Caco-2 (cell line): ENCODE measurements at regions of chrX and their contacts with region 1.

Region 1: GRCh38 chrX:133171962-133172708 is 46.0 kb downstream of the TFDP3 start:
- DNase-seq: peak in 1 of 2 experiments; percentile 28
- H3K4me3 ChIP-seq: no peak overlapping the region
- H3K4me3 Mint-ChIP-seq: no peak overlapping the region
- H3K27ac Mint-ChIP-seq: no peak overlapping the region
- H3K4me1 ChIP-seq: no peaks in the 10 kb centered on the region
- H3K4me1 Mint-ChIP-seq: no peaks in the 10 kb centered on the region
- H3K27me3 ChIP-seq: no peaks in the 10 kb centered on the region; the same call in 1 of the 2 replicates
- H3K27me3 Mint-ChIP-seq: peaks cover 7% of the 10 kb centered on the region
- CTCF ChIP-seq: peak; percentile 40 to 47

Region 2: GRCh38 chrX:132631579-132632232 is 540.4 kb before region 1 on chrX:
- CTCF ChIA-PET with region 1: no interaction called
- POLR2A ChIA-PET with region 1: no interaction called
- intact Hi-C with region 1: loop called (anchors 5 kb)
- DNase-seq: peak in 1 of 2 experiments; percentile 16
- H3K4me3 ChIP-seq: no peak overlapping the region
- H3K4me3 Mint-ChIP-seq: no peak overlapping the region
- H3K27ac Mint-ChIP-seq: no peak overlapping the region
- H3K4me1 ChIP-seq: no peaks in the 10 kb centered on the region
- H3K4me1 Mint-ChIP-seq: no peaks in the 10 kb centered on the region
- H3K27me3 ChIP-seq: no peaks in the 10 kb centered on the region
- H3K27me3 Mint-ChIP-seq: no peaks in the 10 kb centered on the region
- CTCF ChIP-seq: peak; percentile 32 to 35

Region 3: GRCh38 chrX:132740316-132741123 is 431.6 kb before region 1 on chrX:
- CTCF ChIA-PET with region 1: no interaction called
- POLR2A ChIA-PET with region 1: no interaction called
- intact Hi-C with region 1: loop called (anchors 5 kb)
- DNase-seq: peak in 1 of 2 experiments; percentile 8
- H3K4me3 ChIP-seq: no peak overlapping the region
- H3K4me3 Mint-ChIP-seq: no peak overlapping the region
- H3K27ac Mint-ChIP-seq: no peak overlapping the region
- H3K4me1 ChIP-seq: no peaks in the 10 kb centered on the region
- H3K4me1 Mint-ChIP-seq: peaks cover 6% of the 10 kb centered on the region
- H3K27me3 ChIP-seq: no peaks in the 10 kb centered on the region
- H3K27me3 Mint-ChIP-seq: no peaks in the 10 kb centered on the region
- CTCF ChIP-seq: peak; percentile 61 to 66

Region 4: DNA sequence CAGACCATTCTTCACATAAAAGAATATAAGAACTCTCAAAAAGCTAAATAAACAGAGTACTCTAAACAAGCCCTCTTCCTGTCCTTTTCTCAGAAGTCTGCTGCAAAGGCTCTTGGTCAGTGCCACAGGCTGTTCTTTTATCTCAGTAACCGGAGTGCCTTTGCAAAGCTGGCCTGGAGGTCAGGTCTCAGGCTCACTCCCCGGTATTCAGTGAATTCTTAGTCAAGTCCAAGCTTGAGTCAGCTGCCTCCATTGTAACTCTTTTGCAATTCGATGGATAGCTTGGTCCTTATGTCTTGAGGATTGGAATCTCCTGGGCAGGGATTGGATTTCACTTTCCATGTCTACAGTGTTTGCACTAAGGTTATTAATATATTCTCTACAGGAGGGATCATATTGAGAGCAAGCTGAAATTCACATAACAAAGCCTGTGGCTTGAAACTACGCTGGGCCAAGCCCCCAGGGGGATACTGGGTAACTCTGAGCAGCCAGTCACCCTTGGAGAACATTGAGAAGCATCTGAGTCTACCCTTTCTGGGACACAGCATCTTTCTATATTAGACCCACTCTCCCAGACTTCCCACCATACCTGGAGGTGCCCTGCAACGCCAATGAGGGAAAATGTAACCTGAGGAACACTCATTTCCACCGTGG is 203.7 kb before region 1 on chrX:
- CTCF ChIA-PET with region 1: no interaction called
- POLR2A ChIA-PET with region 1: no interaction called
- intact Hi-C with region 1: loop called (anchors 10 kb)
- DNase-seq: peak; percentile 17 to 35
- H3K4me3 ChIP-seq: no peak overlapping the region
- H3K4me3 Mint-ChIP-seq: no peak overlapping the region
- H3K27ac Mint-ChIP-seq: no peak overlapping the region
- H3K4me1 ChIP-seq: no peaks in the 10 kb centered on the region
- H3K4me1 Mint-ChIP-seq: no peaks in the 10 kb centered on the region
- H3K27me3 ChIP-seq: no peaks in the 10 kb centered on the region
- H3K27me3 Mint-ChIP-seq: no peaks in the 10 kb centered on the region
- CTCF ChIP-seq: no peak

Region 5: DNA sequence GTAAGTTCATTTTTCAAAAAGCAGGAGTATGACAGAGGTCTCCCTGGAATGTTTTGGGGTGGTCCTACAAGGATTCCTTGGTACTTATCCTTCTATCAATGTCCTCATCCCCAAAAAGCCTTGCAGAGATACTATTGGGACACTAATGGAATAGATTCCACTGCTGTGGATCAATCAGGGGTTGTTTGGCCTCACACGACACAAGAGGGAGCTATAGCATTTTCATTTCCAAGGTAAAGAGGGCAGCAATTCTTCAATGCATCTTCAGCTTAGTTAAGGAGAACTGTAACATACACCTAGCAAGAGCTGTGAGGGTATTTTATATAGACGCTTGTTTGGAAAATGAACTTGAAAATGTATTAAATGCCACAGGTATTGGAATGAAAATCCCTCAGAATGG is 126.1 kb before region 1 on chrX:
- CTCF ChIA-PET with region 1: interaction called, 3 read pairs
- POLR2A ChIA-PET with region 1: no interaction called
- intact Hi-C with region 1: loop called (anchors 1 kb)
- DNase-seq: peak in 1 of 2 experiments; percentile 28
- H3K4me3 ChIP-seq: no peak overlapping the region
- H3K4me3 Mint-ChIP-seq: no peak overlapping the region
- H3K27ac Mint-ChIP-seq: no peak overlapping the region
- H3K4me1 ChIP-seq: no peaks in the 10 kb centered on the region
- H3K4me1 Mint-ChIP-seq: no peaks in the 10 kb centered on the region
- H3K27me3 ChIP-seq: no peaks in the 10 kb centered on the region
- H3K27me3 Mint-ChIP-seq: no peaks in the 10 kb centered on the region
- CTCF ChIP-seq: peak; percentile 15 to 48

Region 6: DNA sequence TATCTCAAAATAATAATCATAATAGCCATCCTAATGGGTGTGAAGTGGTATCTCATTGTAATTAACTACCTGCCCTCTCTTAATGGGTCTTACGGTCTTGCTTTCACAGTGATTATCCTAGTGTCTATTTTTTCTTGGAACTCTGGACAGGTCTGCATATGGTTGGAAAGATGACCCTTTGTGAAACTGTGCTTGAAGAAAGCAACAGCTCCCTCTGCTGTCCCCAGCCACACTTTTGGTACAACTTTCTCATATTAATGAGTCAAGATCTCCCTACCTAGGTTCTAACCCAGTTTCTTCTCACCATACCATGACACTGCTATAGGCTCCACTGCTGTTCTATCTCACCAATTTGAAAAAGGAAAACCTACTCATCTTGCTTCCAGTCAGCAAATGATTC is 43.6 kb after region 1 on chrX:
- CTCF ChIA-PET with region 1: no interaction called
- POLR2A ChIA-PET with region 1: no interaction called
- intact Hi-C with region 1: loop called (anchors 2 kb)
- DNase-seq: peak in 1 of 2 experiments; percentile 31
- H3K4me3 ChIP-seq: no peak overlapping the region
- H3K4me3 Mint-ChIP-seq: no peak overlapping the region
- H3K27ac Mint-ChIP-seq: no peak overlapping the region
- H3K4me1 ChIP-seq: no peaks in the 10 kb centered on the region
- H3K4me1 Mint-ChIP-seq: no peaks in the 10 kb centered on the region
- H3K27me3 ChIP-seq: no peaks in the 10 kb centered on the region
- H3K27me3 Mint-ChIP-seq: no peaks in the 10 kb centered on the region
- CTCF ChIP-seq: peak; percentile 19 to 36